ENCODE measurements at regions of chr4 and their contacts with region 1.

Region 1: DNA sequence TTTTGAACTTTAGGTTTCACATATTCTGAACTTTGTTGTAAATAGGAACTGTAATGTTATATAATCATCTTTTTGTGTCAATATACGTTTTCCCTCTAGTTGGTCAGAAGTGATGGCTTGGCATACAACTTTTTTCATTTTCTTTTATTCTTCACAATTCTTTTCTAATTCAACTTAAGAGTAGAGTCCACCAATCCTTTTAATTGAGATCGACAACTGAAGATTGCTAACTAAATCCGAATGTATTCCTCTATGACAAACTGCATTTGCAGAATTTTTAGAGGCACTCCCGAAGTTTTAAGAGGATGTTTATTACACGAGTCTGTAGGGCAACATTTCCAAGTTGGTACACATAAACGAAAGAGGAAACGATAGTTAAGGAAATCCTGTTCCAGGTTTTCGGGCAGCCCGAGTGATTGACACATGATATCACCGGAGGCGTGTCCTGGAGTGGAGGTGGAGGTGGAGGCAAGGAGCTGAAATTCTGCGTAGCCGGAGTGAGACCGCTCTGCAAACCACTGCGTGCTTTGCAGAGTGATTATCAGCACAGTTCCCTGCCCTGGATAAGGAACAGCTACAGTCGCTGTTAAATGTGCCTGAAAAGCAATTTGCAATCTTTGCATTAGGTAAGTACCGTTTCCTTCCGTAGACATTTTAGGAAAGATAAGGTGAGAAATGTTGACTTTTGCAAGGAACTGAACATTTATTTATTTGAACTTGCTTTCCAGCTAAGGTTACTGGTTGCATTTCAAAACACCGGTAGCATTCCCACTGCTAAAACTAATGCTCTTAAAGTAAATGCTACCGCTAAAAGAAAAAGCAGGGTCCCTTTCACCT is at the start of gene SPRY1:
- DNase-seq: peak; percentile 78 to 95
- ATAC-seq: peak; percentile 83 to 91 (median 88)
- H3K4me3 ChIP-seq: peak within 1 kb of the TSS; percentile 65 to 85 (median 74)
- H3K27ac ChIP-seq: peak within 1 kb of the TSS; percentile 85 to 97 (median 94)
- H3K4me1 ChIP-seq: peaks cover 0 to 23% (median 6%) of the 10 kb centered on the region in 9 donors
- H3K27me3 ChIP-seq: peaks cover 0 to 8% (median 0%) of the 10 kb centered on the region in 7 donors
- CTCF ChIP-seq: no peak
- total RNA-seq, gene SPRY1: 21.6 to 61.7 (median 37.4) TPM

Region 2: GRCh38 chr4:123102897-123103471 is 293.5 kb before region 1 on chr4:
- intact Hi-C with region 1: loop called in 2 of 10 experiments (anchors 10 kb)
- DNase-seq: no peak
- ATAC-seq: peak in 6 of 8 donors; percentile 58 to 78 (median 72)
- H3K4me3 ChIP-seq: no peak overlapping the region
- H3K27ac ChIP-seq: peak overlapping the region in 1 of 10 donors; percentile 16
- H3K4me1 ChIP-seq: peaks cover 0 to 15% (median 4%) of the 10 kb centered on the region in 9 donors
- H3K27me3 ChIP-seq: no peaks in the 10 kb centered on the region
- CTCF ChIP-seq: peak; percentile 44 to 86 (median 78)

Region 3: GRCh38 chr4:123250843-123251242 is 145.7 kb before region 1 on chr4:
- intact Hi-C with region 1: loop called in 6 of 10 experiments (anchors 2 to 10 kb)
- DNase-seq: peak; percentile 33 to 72
- ATAC-seq: peak; percentile 51 to 89 (median 81)
- H3K4me3 ChIP-seq: no peak overlapping the region
- H3K27ac ChIP-seq: peak overlapping the region in 8 of 10 donors; percentile 1 to 71 (median 45)
- H3K4me1 ChIP-seq: peaks cover 2 to 54% (median 44%) of the 10 kb centered on the region in 9 donors
- H3K27me3 ChIP-seq: no peaks in the 10 kb centered on the region
- CTCF ChIP-seq: no peak

Region 4: DNA sequence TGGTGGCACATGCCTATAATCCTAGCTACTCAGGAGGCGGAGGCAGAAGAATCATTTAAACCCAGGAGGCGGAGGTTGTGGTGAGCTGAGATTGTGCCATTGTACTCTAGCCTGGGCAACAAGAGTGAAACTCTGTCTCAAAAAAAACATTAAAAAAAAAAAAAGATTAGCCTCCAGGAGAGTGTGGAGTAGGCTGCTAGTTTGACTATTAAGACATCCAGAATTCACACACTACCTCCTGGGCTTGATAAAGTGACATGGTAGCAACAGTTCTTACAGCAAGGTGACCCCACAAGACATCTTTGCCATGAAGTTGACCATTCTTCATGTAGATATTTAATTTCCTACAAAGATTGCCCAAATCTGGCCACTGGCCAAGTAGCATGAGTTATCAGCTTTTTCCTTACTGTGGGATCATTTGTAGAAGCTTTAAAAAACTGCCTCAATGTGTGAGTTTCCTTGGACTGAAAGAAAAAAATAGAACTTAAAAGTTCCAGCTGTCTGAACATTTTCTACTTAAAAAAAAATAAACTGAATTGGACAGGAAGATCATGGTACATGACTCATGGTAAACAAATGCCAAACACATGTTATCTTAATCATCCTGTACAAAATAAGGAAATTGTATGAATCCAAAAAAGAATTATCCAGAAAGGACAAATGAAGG is 35.2 kb before region 1 on chr4:
- intact Hi-C with region 1: loop called in 1 of 10 experiments (anchors 5 kb)
- DNase-seq: no peak
- ATAC-seq: peak in 7 of 8 donors; percentile 58 to 74 (median 68)
- H3K4me3 ChIP-seq: no peak overlapping the region
- H3K27ac ChIP-seq: peak overlapping the region; percentile 50 to 86 (median 70)
- H3K4me1 ChIP-seq: peaks cover 0 to 42% (median 13%) of the 10 kb centered on the region in 9 donors
- H3K27me3 ChIP-seq: no peaks in the 10 kb centered on the region
- CTCF ChIP-seq: no peak

Region 5: GRCh38 chr4:123649645-123650391 is 253.3 kb after region 1 on chr4:
- intact Hi-C with region 1: loop called in 5 of 10 experiments (anchors 5 to 10 kb)
- DNase-seq: peak in 1 of 2 donors; percentile 42
- ATAC-seq: peak; percentile 45 to 86 (median 71)
- H3K4me3 ChIP-seq: peak overlapping the region in 4 of 10 donors; percentile 15 to 30 (median 24)
- H3K27ac ChIP-seq: peak overlapping the region; percentile 28 to 80 (median 65)
- H3K4me1 ChIP-seq: peaks cover 0 to 37% (median 20%) of the 10 kb centered on the region in 9 donors
- H3K27me3 ChIP-seq: no peaks in the 10 kb centered on the region
- CTCF ChIP-seq: no peak

Region 6: DNA sequence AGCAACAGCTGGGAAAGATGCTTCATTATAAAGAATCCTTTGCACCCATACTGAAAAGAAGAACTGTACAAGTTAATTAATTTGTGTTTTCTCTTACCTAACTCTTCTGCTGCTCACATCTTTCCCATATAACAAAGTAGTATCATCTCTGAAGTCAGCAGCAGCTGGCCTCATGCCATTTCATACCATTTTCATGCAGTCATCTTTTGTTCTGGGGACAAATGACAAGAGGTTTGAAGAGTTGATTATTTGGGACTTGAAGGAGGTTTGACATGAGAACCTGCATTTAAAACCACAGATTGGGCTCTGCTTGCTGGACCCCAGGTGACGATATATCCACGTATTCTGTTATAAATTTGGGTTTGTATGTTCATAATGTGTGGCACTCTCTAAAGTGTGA is 430.4 kb after region 1 on chr4:
- intact Hi-C with region 1: loop called in 2 of 10 experiments (anchors 5 to 10 kb)
- DNase-seq: peak in 1 of 2 donors; percentile 72
- ATAC-seq: peak in 7 of 8 donors; percentile 46 to 84 (median 66)
- H3K4me3 ChIP-seq: no peak overlapping the region
- H3K27ac ChIP-seq: peak overlapping the region in 7 of 10 donors; percentile 4 to 77 (median 65)
- H3K4me1 ChIP-seq: peaks cover 5 to 42% (median 36%) of the 10 kb centered on the region in 9 donors
- H3K27me3 ChIP-seq: no peaks in the 10 kb centered on the region
- CTCF ChIP-seq: no peak

Region 7: GRCh38 chr4:124111922-124112321 is 715.4 kb after region 1 on chr4:
- intact Hi-C with region 1: loop called in 6 of 10 experiments (anchors 5 to 10 kb)
- DNase-seq: peak in 1 of 2 donors; percentile 32
- ATAC-seq: peak in 7 of 8 donors; percentile 82 to 95 (median 91)
- H3K4me3 ChIP-seq: peak overlapping the region in 1 of 10 donors; percentile 9
- H3K27ac ChIP-seq: peak overlapping the region in 6 of 10 donors; percentile 1 to 59 (median 36)
- H3K4me1 ChIP-seq: peaks cover 0 to 18% (median 10%) of the 10 kb centered on the region in 9 donors
- H3K27me3 ChIP-seq: no peaks in the 10 kb centered on the region
- CTCF ChIP-seq: peak; percentile 57 to 87 (median 75)

Measured in heart right ventricle (tissue), 16 donors.